ENCODE measurements at regions of chr3 and their contacts with region 1.

Region 1: DNA sequence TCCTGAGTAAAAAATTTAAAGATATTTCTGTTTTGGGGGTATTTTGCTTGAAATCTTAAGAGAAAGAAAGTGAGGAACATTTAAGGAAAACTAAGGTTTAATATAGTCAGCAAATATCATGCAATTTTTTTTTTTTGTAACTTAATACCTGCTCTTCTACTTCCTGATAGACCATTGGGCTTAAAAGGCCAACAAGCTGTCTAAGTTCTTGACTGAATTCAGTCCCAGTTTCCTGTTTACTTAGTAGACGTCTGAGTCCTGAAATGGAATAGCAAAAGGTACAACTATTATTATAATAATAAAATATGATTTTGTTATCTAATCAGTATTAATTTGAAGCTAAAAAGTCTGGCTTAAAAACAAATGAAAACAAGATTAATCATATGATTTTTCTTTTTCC is 37.9 kb downstream of the IQCB1 start:
- DNase-seq: no peak
- H3K4me3 Mint-ChIP-seq: no peak overlapping the region
- H3K27ac Mint-ChIP-seq: no peak overlapping the region
- H3K4me1 Mint-ChIP-seq: no peaks in the 10 kb centered on the region
- H3K27me3 Mint-ChIP-seq: no peaks in the 10 kb centered on the region
- CTCF ChIP-seq: no peak

Region 2: DNA sequence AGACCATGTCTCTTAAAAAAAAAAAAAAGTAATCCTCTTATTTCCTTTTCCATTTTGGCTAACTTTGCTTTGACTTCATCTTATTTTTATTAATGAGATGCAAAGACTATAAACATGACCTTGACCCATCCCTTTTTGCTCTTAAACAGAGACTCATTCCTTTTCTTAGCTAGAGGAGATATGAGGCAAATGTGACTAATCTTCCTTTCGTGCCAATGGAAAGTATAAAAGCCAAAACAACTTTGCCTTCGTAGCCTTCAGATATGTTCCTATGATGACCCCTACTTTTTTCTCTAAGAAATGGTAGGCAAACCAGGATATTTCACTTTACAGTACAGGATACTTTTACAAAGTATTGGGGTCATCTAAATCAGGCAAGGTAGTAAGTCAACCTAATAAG is 10.5 kb before region 1 on chr3:
- CTCF ChIA-PET with region 1: interaction called, 12 read pairs
- intact Hi-C with region 1: no loop called
- DNase-seq: no peak
- H3K4me3 Mint-ChIP-seq: no peak overlapping the region
- H3K27ac Mint-ChIP-seq: peak overlapping the region; percentile 23
- H3K4me1 Mint-ChIP-seq: no peaks in the 10 kb centered on the region
- H3K27me3 Mint-ChIP-seq: no peaks in the 10 kb centered on the region
- CTCF ChIP-seq: no peak